B cell (primary cell): ENCODE measurements at regions of chr3 and their contacts with region 1.

Region 1: DNA sequence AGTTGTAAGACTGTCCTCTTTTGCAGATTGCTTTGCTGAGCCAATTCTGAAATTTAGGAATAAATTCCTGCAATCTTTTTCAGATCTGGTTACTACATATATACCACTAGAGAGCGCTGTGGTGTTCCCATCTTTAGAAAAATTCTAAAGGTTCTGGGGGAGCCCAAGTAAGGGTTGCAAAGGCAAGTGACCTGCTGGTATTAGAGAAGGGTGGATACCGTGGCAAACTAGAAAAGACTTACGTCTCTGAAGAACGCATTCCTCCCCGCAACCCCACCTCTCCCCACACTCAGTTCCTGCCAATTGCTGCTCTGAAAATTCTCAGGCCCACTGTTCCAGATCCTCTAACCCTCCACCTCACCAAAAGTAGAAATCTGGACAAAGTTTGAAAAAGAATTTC is 48.5 kb downstream of the EFHB start:
- DNase-seq: peak; percentile 50
- ATAC-seq: peak; percentile 33
- H3K4me3 ChIP-seq: no peak overlapping the region
- H3K4me3 Mint-ChIP-seq: no peak overlapping the region
- H3K27ac ChIP-seq: no peak overlapping the region
- H3K27ac Mint-ChIP-seq: no peak overlapping the region
- H3K4me1 ChIP-seq: no peaks in the 10 kb centered on the region
- H3K4me1 Mint-ChIP-seq: no peaks in the 10 kb centered on the region
- H3K27me3 ChIP-seq: no peaks in the 10 kb centered on the region
- H3K27me3 Mint-ChIP-seq: no peaks in the 10 kb centered on the region
- CTCF ChIP-seq: peak; percentile 68

Region 2: DNA sequence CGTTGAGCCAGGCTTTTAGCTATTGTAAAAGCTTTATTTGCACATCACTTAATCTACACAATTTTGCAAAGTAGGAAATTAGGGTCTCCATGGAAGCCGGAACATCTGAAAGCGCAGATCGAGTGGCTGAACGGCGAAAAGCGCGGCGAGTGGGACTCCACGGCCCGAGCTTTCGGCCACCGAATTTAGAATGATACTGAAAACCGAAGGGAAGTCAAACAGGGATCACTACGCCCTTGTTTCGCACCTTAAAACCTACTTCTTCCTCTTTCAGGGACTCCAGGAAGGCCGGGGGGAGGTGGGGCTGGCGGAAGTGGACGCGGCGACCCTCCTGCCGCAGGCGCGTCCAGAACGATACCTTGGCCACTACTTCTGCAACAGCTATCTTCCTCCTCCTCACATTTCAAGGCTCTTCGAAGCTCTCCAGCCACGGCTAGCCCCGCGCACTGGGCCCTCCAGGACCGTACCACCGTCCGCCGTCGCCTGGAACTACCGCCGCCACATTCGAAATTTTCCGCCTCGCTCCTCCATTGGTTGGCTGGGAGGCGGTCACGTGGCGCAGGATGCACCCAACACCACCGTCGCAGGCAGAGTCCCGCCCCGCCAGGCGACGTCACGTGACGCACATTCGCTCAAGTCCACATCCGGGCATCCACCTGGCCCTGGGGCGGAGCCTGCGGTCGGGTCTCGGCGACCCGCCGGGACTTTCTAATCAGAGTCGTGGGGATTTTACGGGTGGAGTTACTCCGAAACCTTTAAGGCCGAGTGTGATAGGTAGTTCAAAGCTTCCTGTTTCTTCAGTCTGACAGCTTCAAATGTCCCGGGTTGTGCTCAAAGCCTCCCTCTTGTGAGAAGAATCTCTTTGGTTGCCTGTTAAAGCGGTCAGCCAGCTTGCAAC is 300.5 kb after region 1 on chr3 and contains the start of gene SGO1:
- CTCF ChIA-PET with region 1: interaction called, 3 read pairs
- POLR2A ChIA-PET with region 1: no interaction called
- intact Hi-C with region 1: loop called (anchors 5 kb)
- DNase-seq: peak; percentile 100
- ATAC-seq: peak; percentile 91
- H3K4me3 ChIP-seq: peak within 1 kb of the TSS; percentile 70 to 97 (median 85)
- H3K4me3 Mint-ChIP-seq: no peak within 1 kb of the TSS
- H3K27ac ChIP-seq: peak within 1 kb of the TSS; percentile 98
- H3K27ac Mint-ChIP-seq: no peak within 1 kb of the TSS
- H3K4me1 ChIP-seq: peaks cover 19 to 26% of the 10 kb centered on the region in 2 donors
- H3K4me1 Mint-ChIP-seq: peaks cover 4% of the 10 kb centered on the region
- H3K27me3 ChIP-seq: no peaks in the 10 kb centered on the region
- H3K27me3 Mint-ChIP-seq: no peaks in the 10 kb centered on the region
- CTCF ChIP-seq: no peak
- total RNA-seq, gene SGO1: 6.4 and 6.7 TPM in 2 replicates

Region 3: DNA sequence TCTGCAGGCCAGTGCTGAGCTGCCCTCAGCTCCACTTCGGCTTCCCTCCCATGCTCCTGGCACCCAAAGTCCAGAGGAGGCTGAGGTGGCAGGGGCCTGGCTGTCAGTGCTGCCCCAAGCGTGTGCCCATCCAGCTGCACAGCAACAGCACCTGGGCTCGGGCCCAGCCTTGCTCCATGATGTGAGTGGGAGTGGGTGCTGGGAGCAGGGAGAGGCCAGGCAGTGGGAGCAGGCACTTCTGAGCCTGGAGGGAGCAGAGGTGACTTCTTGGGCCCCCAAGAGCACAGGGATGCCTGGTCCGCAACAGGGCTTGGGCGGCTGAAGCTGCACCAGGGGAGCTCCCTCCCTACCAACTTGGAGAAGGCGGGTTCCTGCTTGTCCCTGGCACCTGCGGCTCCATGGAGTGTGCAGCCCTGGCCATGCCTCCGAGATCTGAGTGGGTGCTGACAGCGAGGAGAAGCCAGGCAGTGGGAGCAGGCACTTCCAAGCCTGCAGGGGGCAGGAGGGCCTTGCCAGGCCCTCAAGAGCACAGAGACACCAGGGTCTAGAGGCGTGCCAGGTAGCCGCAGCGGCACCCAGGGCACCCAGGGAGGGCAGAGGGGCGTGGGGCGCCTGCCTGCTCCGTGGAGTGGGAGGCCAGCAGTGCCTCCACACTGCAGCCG is 667.3 kb after region 1 on chr3:
- CTCF ChIA-PET with region 1: no interaction called
- POLR2A ChIA-PET with region 1: no interaction called
- intact Hi-C with region 1: loop called (anchors 10 kb)
- DNase-seq: no peak
- ATAC-seq: no peak
- H3K4me3 ChIP-seq: no peak overlapping the region
- H3K4me3 Mint-ChIP-seq: no peak overlapping the region
- H3K27ac ChIP-seq: no peak overlapping the region
- H3K27ac Mint-ChIP-seq: no peak overlapping the region
- H3K4me1 ChIP-seq: no peaks in the 10 kb centered on the region
- H3K4me1 Mint-ChIP-seq: no peaks in the 10 kb centered on the region
- H3K27me3 ChIP-seq: no peaks in the 10 kb centered on the region
- H3K27me3 Mint-ChIP-seq: no peaks in the 10 kb centered on the region
- CTCF ChIP-seq: no peak